H1 (cell line): ENCODE measurements at regions of chr11 and their contacts with region 1.

Region 1: GRCh38 chr11:64000026-64000739 is 13.9 kb downstream of the OTUB1 start:
- DNase-seq: peak in 1 of 2 experiments; percentile 91
- H3K4me3 ChIP-seq: peak overlapping the region; percentile 14 to 61 (median 47)
- H3K27ac ChIP-seq: no peak overlapping the region
- H3K4me1 ChIP-seq: peaks cover 2 to 23% (median 12%) of the 10 kb centered on the region in 4 experiments; a peak in 6 of 7 replicates
- H3K27me3 ChIP-seq: peaks cover 5 to 36% (median 24%) of the 10 kb centered on the region in 4 experiments
- CTCF ChIP-seq: peak in 2 of 3 experiments; percentile 57 to 92; a peak in 3 of 4 replicates
- EP300 ChIP-seq: no peak
- POLR2A ChIP-seq: no peak
- RAD21 ChIP-seq: peak; percentile 69 to 84

Region 2: GRCh38 chr11:63986156-63986931 is 13.8 kb before region 1 on chr11 and contains the start of gene OTUB1:
- CTCF ChIA-PET with region 1: interaction called, 37 read pairs
- POLR2A ChIA-PET with region 1: interaction called, 46 read pairs
- DNase-seq: peak; percentile 92 to 96
- H3K4me3 ChIP-seq: peak within 1 kb of the TSS; percentile 63 to 86 (median 70)
- H3K27ac ChIP-seq: peak within 1 kb of the TSS; percentile 96
- H3K4me1 ChIP-seq: peaks cover 0 to 16% (median 9%) of the 10 kb centered on the region in 4 experiments; a peak in 6 of 7 replicates
- H3K27me3 ChIP-seq: no peaks in the 10 kb centered on the region
- CTCF ChIP-seq: peak in 1 of 3 experiments; percentile 19; a peak in 1 of 4 replicates
- EP300 ChIP-seq: no peak
- POLR2A ChIP-seq: peak; percentile 94 to 97
- RAD21 ChIP-seq: no peak
- total RNA-seq, gene OTUB1: 110 and 112 TPM in 2 replicates

Region 3: DNA sequence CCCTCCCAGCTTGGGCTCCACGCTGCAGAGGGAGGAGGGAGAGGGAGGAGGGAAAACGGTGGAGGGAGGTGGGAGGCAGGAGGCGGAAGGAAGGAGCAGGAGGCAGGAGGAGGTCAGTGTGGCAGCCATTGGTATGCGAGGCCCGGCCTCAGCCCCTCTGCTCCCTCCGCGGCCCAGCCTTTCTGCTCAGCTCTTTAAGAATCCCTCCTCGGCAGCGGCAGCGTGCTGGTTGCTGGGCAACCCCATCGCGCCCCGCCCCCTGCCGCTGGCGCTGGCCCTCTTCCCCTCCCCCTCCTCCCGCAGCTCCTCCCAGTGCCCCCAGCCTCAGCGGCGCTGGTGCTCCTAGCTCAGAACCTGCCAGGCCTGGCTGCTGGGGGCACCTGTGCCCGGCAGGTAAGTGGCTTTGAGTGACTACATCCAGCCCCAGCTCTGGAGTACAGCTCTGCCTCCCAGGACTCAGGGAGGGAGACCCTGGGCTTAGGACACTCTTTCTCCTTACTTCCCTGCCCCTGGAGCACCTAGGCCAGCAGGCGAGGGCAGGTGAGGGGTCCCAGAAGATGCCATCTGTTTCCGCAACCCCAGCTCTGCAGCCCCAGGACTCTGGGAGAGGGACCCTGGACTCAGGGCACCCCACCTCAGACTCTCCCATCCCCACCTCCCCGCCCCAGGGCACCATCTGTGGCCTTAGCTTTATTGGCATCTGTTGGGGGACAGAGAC is 28.4 kb after region 1 on chr11:
- CTCF ChIA-PET with region 1: interaction called, 41 read pairs
- POLR2A ChIA-PET with region 1: interaction called, 12 read pairs
- DNase-seq: peak; percentile 68 to 87
- H3K4me3 ChIP-seq: 0 out of 8 replicates have a peak overlapping the region, but pooled peaks of 1 of the 4 experiments have one; percentile 31
- H3K27ac ChIP-seq: 0 out of 2 replicates have a peak overlapping the region, but pooled peaks have one; percentile 36
- H3K4me1 ChIP-seq: peaks cover 15 to 43% (median 35%) of the 10 kb centered on the region in 4 experiments
- H3K27me3 ChIP-seq: peaks cover 11 to 47% (median 39%) of the 10 kb centered on the region in 4 experiments
- CTCF ChIP-seq: no peak
- EP300 ChIP-seq: no peak
- POLR2A ChIP-seq: no peak
- RAD21 ChIP-seq: no peak

Region 4: DNA sequence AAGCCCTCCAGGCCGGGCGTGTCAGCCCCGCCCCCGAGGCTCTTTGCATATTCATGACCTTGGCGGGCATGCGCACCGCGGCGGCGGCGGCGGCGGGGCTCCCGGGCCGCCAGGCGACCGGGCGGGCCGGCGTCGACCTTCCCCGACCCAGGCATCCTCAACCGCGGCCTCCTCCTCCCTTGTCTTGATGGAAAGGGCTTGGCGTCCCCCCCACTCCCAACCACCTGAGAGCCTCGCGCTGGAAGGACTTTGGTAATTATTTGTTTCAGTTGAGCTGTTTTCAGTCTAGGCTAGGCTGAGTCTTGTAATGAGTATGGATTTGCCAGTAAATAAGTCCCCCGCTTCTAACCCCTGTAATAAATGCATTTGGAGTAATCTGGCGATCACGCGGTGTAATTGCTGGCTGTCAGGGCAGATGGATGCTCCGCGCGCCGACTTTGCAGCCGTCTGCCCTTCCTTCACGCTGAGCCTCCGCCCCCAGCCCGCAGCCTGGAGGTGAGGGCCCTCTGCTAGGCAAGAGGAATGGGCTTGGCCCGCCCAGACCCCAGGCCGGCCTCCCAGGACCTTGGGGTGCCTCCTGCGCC is 60.8 kb after region 1 on chr11:
- CTCF ChIA-PET with region 1: interaction called, 10 read pairs
- POLR2A ChIA-PET with region 1: interaction called, 3 read pairs
- DNase-seq: peak in 1 of 2 experiments; percentile 89
- H3K4me3 ChIP-seq: peak overlapping the region; percentile 26 to 59 (median 35)
- H3K27ac ChIP-seq: no peak overlapping the region
- H3K4me1 ChIP-seq: peaks cover 0 to 10% (median 6%) of the 10 kb centered on the region in 4 experiments; a peak in 6 of 7 replicates
- H3K27me3 ChIP-seq: peaks cover 16 to 87% (median 70%) of the 10 kb centered on the region in 4 experiments
- CTCF ChIP-seq: no peak
- EP300 ChIP-seq: no peak
- POLR2A ChIP-seq: no peak
- RAD21 ChIP-seq: no peak